BJ (cell line): ENCODE measurements at regions of chr1 and their contacts with region 1.

Region 1: DNA sequence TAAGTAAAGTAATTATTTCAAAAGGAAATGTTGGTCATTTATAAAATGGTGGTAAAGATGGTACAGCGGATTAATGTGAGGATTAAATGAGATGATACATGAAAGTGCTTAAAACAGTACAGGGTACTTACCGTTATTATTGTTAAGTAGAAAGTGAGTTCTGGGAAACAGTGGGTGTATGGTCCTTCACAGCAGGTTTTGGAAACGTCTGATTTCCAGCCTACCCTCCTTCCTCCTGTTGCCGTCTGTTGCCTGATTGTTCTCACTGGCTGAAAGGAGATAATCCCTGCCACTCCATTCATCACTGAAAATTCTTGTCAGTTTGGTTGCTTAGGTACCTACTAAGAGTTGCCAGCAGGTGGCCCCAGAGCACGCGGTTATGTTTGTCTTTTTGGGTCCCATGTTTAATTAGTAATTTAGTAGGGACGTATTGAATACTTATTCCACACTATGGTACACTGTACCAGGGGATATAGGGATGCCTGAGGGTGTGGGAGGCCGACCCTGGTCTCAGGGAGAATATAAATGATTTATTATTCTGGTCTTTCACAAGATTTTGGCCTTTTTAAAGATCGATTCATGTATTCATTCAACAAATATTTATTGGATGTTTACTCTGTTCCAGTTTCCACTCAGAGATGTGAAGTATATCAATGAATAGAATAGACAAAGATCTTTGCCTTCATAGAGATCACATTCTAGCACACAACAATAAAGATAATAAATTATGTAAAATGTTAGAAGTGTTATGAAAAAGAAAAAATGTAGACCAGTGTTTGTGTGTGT is 30.8 kb upstream of the RPTN start:
- DNase-seq: no peak
- H3K4me3 ChIP-seq: no peak overlapping the region
- H3K27me3 ChIP-seq: no peaks in the 10 kb centered on the region; the same call in 1 of the 2 replicates
- CTCF ChIP-seq: peak; percentile 80

Region 2: GRCh38 chr1:152047730-152048402 is 142.0 kb before region 1 on chr1:
- CTCF ChIA-PET with region 1: interaction called, 69 read pairs
- POLR2A ChIA-PET with region 1: no interaction called
- DNase-seq: peak; percentile 99
- H3K4me3 ChIP-seq: no peak overlapping the region; the same call in 1 of the 2 replicates
- H3K27me3 ChIP-seq: peaks cover 2% of the 10 kb centered on the region; the same call in 1 of the 2 replicates
- CTCF ChIP-seq: peak; percentile 74

Region 3: DNA sequence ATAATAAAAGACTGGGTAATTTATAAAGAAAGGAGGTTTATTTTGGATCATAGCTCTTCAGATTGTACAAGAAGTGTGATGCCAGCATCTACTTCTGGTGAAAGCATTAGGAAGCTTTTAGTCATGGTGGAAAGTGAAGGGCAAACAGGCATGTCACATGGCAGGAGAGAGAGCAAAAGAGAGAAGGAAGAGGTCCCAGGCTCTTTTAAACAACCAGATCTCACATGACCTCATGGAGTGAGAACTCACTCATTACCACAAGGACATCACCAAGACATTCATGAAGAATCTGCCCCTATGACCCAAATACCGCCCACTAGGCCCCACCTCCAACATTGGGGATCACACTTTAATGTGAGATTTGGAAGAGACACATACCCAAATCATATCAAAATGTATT is 40.9 kb before region 1 on chr1:
- CTCF ChIA-PET with region 1: interaction called, 96 read pairs
- POLR2A ChIA-PET with region 1: no interaction called
- DNase-seq: no peak
- H3K4me3 ChIP-seq: no peak overlapping the region
- H3K27me3 ChIP-seq: no peaks in the 10 kb centered on the region; the same call in 1 of the 2 replicates
- CTCF ChIP-seq: no peak

Region 4: DNA sequence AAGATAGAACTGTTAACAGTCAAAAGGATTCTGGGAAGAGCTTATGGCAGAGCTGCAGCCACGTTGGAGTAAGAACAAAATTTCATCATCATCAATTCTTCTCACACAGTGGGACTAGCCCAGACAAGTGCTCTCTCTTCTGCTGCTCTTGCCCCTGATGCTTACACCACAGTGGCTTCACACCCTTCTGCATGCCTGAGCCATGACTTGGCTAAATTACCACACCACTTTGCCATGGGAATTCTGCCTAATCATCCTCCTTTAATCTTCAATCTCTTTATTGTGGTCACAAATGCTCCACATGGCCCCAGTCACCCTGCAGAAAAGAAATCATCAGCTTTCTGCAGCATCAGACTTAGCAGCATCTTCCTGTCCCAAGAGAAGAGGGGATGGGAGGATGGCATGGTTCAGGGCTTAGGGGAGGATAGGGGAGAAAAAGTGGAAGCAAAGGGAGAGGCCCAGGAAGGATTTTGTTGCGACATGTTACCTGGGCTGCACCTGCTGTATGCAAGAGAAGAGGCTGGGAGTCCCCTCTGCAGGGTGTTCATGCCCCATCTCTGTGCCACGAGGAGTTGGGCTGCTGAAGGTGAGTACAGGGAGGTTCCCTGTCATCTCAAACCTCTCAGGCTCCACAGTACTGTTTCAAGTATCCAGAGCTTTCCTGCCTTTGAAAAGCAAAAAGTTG is 21.9 kb before region 1 on chr1:
- CTCF ChIA-PET with region 1: interaction called, 168 read pairs
- POLR2A ChIA-PET with region 1: interaction called, 3 read pairs
- DNase-seq: peak; percentile 87
- H3K4me3 ChIP-seq: no peak overlapping the region
- H3K27me3 ChIP-seq: peaks cover 3% of the 10 kb centered on the region; the same call in 1 of the 2 replicates
- CTCF ChIP-seq: no peak

Region 5: DNA sequence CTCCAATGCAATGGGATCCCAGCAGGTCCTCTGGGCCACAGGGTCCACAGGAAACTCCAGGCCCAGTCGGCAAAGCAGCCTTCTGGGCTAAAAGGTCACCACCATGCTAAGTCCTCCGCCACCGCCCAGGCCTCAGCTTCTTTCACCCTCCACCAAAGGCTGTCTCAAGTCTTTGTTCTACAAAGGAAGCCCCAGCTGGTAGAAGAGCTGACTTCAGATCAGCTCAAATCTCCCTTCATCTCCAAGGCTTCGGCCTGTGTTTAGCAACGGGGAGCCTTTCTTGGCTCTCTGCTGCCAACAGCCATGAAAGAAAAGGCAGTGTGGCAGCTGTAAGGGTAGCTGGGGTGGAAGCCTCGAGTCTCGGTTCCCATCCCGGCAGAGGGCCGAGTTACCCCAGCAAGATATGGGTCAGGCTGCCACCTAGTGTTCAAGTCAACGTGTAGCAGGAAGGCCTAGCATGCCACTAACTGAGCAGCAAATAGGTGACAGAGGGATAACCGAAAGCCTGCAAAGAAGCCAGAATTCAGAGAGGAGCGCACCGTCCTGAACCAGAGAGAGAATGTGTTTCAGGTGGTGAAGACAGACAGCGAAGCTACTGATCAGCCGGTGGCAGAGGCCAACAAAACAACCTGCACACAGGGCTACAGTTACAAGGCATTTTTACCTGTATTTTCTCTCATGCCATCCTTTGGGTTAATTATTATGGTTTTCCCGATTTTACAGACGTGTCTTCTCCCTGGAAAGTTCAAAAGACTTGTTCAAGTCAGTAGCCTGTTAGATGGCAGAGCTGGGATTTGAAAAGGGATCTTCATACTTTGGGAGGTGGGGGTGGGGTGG is 251.0 kb after region 1 on chr1:
- CTCF ChIA-PET with region 1: interaction called, 25 read pairs
- POLR2A ChIA-PET with region 1: no interaction called
- DNase-seq: no peak
- H3K4me3 ChIP-seq: no peak overlapping the region
- H3K27me3 ChIP-seq: no peaks in the 10 kb centered on the region; the same call in 1 of the 2 replicates
- CTCF ChIP-seq: peak; percentile 87